Prostate gland (tissue), 2 donors: ENCODE measurements at regions of chr10 and their contacts with region 1.

Region 1: GRCh38 chr10:119596537-119597404 is at the start of gene TIAL1:
- DNase-seq: peak; percentile 99
- H3K4me3 ChIP-seq: peak within 1 kb of the TSS; percentile 77 to 93
- H3K27ac ChIP-seq: peak within 1 kb of the TSS; percentile 99
- H3K4me1 ChIP-seq: peaks cover 7% of the 10 kb centered on the region
- H3K27me3 ChIP-seq: no peaks in the 10 kb centered on the region
- CTCF ChIP-seq: peak in 1 of 4 experiments; percentile 18
- POLR2A ChIP-seq: peak; percentile 71
- total RNA-seq, gene TIAL1: 68.7 to 74.3 TPM

Region 2: DNA sequence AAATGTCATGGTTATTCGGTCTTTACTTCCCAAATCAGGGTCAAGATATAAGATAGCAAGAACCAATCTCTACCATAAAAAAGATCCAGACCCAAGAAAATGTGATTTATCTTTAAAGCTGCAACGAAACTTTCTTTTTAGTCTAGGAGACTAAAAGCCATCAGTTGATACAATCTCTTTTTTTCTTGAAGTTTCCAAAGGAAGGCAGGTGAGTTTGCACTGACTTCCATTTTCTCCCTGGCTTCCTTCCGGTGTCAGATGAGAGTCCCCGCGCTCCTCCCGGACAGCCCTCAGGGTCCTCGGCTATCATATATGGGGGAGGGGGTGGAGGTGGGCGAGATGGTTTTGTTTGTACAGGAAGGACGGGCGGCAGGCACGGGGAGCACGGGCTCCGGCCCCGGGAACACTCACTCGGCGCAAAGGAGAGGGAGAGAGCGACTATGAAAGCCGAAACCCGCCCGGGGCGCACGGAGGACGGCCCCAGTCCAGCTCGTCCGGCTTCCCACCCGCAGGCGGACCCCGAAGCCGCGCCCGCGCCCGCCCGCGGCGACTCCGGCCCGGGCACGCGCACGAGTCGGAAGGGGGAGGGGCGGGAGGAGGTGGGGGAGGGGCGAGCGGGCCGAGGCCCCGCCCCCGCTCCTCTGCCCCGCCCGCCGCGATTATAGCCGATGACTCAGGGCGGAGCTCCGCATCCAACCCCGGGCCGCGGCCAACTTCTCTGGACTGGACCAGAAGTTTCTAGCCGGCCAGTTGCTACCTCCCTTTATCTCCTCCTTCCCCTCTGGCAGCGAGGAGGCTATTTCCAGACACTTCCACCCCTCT is 54.1 kb after region 1 on chr10 and contains the start of gene BAG3:
- intact Hi-C with region 1: loop called (anchors 5 kb)
- DNase-seq: peak; percentile 94
- H3K4me3 ChIP-seq: peak within 1 kb of the TSS; percentile 97
- H3K27ac ChIP-seq: peak within 1 kb of the TSS; percentile 98 to 99
- H3K4me1 ChIP-seq: peaks cover 10% of the 10 kb centered on the region
- H3K27me3 ChIP-seq: no peaks in the 10 kb centered on the region
- CTCF ChIP-seq: no peak
- POLR2A ChIP-seq: peak; percentile 91
- total RNA-seq, gene BAG3: 45.4 to 56.4 TPM

Region 3: GRCh38 chr10:119872860-119873681 is 276.3 kb after region 1 on chr10:
- intact Hi-C with region 1: loop called (anchors 5 kb)
- DNase-seq: peak; percentile 85
- H3K4me3 ChIP-seq: peak overlapping the region; percentile 82 to 92
- H3K27ac ChIP-seq: peak overlapping the region; percentile 86 to 92
- H3K4me1 ChIP-seq: no peaks in the 10 kb centered on the region
- H3K27me3 ChIP-seq: no peaks in the 10 kb centered on the region
- CTCF ChIP-seq: no peak
- POLR2A ChIP-seq: no peak